SK-N-SH (cell line): ENCODE measurements at regions of chr10 and their contacts with region 1.

Region 1: GRCh38 chr10:100562008-100562711 is 26.4 kb downstream of the HIF1AN start:
- DNase-seq: peak; percentile 94
- H3K4me3 ChIP-seq: no peak overlapping the region; a peak in 1 of 4 replicates
- H3K27ac ChIP-seq: no peak overlapping the region
- H3K4me1 ChIP-seq: no peaks in the 10 kb centered on the region; a peak in 1 of 4 replicates
- H3K27me3 ChIP-seq: no peaks in the 10 kb centered on the region
- CTCF ChIP-seq: peak; percentile 67
- EP300 ChIP-seq: no peak
- RAD21 ChIP-seq: peak; percentile 97

Region 2: GRCh38 chr10:100377830-100378229 is 184.3 kb before region 1 on chr10:
- CTCF ChIA-PET with region 1: no interaction called
- POLR2A ChIA-PET with region 1: no interaction called
- DNase-seq: no peak
- H3K4me3 ChIP-seq: no peak overlapping the region
- H3K27ac ChIP-seq: no peak overlapping the region
- H3K4me1 ChIP-seq: peaks cover 3 to 5% of the 10 kb centered on the region in 2 experiments
- H3K27me3 ChIP-seq: no peaks in the 10 kb centered on the region
- CTCF ChIP-seq: no peak
- EP300 ChIP-seq: no peak
- RAD21 ChIP-seq: no peak

Region 3: GRCh38 chr10:100551196-100551595 is 11.0 kb before region 1 on chr10:
- CTCF ChIA-PET with region 1: interaction called, 69 read pairs
- POLR2A ChIA-PET with region 1: interaction called, 3 read pairs
- DNase-seq: no peak
- H3K4me3 ChIP-seq: no peak overlapping the region
- H3K27ac ChIP-seq: no peak overlapping the region; a peak in 1 of 4 replicates
- H3K4me1 ChIP-seq: peaks cover 0 to 8% of the 10 kb centered on the region in 2 experiments; a peak in 1 of 4 replicates
- H3K27me3 ChIP-seq: no peaks in the 10 kb centered on the region
- CTCF ChIP-seq: no peak
- EP300 ChIP-seq: no peak
- RAD21 ChIP-seq: no peak

Region 4: GRCh38 chr10:100670828-100671479 is 108.8 kb after region 1 on chr10:
- CTCF ChIA-PET with region 1: interaction called, 12 read pairs
- POLR2A ChIA-PET with region 1: no interaction called
- DNase-seq: peak; percentile 92
- H3K4me3 ChIP-seq: peak overlapping the region; percentile 6 to 51; a peak in 1 of 4 replicates
- H3K27ac ChIP-seq: no peak overlapping the region
- H3K4me1 ChIP-seq: no peaks in the 10 kb centered on the region; a peak in 1 of 4 replicates
- H3K27me3 ChIP-seq: peaks cover 30% of the 10 kb centered on the region
- CTCF ChIP-seq: peak; percentile 70
- EP300 ChIP-seq: no peak
- RAD21 ChIP-seq: peak; percentile 54

Region 5: DNA sequence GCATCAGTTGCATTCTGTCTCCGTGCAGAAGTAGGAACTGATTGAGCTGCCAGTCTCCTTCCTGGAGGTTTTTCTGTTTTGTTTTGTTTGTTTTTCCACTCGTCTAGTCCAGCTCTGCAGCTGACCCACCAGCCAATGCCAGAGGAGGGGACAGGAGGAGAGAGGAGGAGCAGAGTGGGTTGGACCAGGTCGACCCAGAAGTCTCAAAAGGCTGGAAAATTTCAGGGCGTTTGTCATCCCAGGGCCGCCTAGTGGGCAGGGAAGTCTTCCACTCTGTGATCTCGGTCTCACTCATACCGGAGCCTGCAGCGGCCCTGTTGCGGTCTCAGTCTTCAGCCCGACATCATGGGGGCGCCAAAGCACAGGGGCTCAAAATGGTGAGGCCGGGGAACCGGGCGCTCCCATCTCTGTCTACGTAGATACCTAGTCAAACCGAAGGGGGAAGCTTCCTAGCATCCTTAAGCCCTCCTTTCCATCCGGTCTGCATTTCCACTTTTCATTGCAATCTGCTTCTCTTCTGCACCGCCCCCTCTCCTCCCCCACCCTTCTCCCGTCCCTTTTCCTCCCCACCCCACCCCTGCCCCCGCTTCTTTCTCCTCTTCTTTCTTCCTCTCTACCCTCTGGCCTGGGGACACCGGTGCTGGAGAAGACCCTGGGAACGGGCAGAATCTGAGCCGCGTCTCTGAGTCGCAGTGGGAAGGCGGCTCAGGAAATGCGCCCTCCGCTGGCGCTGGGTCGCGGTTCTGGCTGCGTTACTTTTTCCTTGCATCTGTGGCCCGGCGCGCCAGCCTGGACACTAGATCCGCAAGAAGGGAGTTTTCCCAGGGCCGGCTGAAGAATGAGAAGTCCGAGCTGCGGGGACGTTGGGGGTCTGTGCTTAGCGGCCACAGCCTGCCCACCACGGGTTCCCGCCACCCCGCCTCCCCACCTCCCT is 167.0 kb after region 1 on chr10:
- CTCF ChIA-PET with region 1: interaction called, 20 read pairs
- POLR2A ChIA-PET with region 1: interaction called, 3 read pairs
- DNase-seq: peak; percentile 83
- H3K4me3 ChIP-seq: no peak overlapping the region; a peak in 1 of 4 replicates
- H3K27ac ChIP-seq: no peak overlapping the region
- H3K4me1 ChIP-seq: peaks cover 0 to 11% of the 10 kb centered on the region in 2 experiments; a peak in 1 of 4 replicates
- H3K27me3 ChIP-seq: peaks cover 91% of the 10 kb centered on the region
- CTCF ChIP-seq: peak; percentile 40
- EP300 ChIP-seq: no peak
- RAD21 ChIP-seq: peak; percentile 64

Region 6: GRCh38 chr10:100817268-100817839 is 255.2 kb after region 1 on chr10:
- CTCF ChIA-PET with region 1: interaction called, 14 read pairs
- POLR2A ChIA-PET with region 1: no interaction called
- DNase-seq: no peak
- H3K4me3 ChIP-seq: no peak overlapping the region
- H3K27ac ChIP-seq: no peak overlapping the region
- H3K4me1 ChIP-seq: peaks cover 0 to 4% of the 10 kb centered on the region in 2 experiments; a peak in 1 of 4 replicates
- H3K27me3 ChIP-seq: peaks cover 37% of the 10 kb centered on the region
- CTCF ChIP-seq: no peak
- EP300 ChIP-seq: no peak
- RAD21 ChIP-seq: peak; percentile 59

Region 7: GRCh38 chr10:100872034-100872791 is 310.1 kb after region 1 on chr10:
- CTCF ChIA-PET with region 1: interaction called, 116 read pairs
- POLR2A ChIA-PET with region 1: interaction called, 3 read pairs
- DNase-seq: peak; percentile 91
- H3K4me3 ChIP-seq: no peak overlapping the region; a peak in 1 of 4 replicates
- H3K27ac ChIP-seq: 0 out of 4 replicates have a peak overlapping the region, but pooled peaks of 1 of the 2 experiments have one; percentile 7
- H3K4me1 ChIP-seq: no peaks in the 10 kb centered on the region; a peak in 2 of 4 replicates
- H3K27me3 ChIP-seq: no peaks in the 10 kb centered on the region
- CTCF ChIP-seq: peak; percentile 68
- EP300 ChIP-seq: no peak
- RAD21 ChIP-seq: peak; percentile 80

Region 8: GRCh38 chr10:100888796-100889356 is 326.7 kb after region 1 on chr10:
- CTCF ChIA-PET with region 1: interaction called, 12 read pairs
- POLR2A ChIA-PET with region 1: no interaction called
- DNase-seq: no peak
- H3K4me3 ChIP-seq: no peak overlapping the region
- H3K27ac ChIP-seq: no peak overlapping the region
- H3K4me1 ChIP-seq: peaks cover 0 to 11% of the 10 kb centered on the region in 2 experiments; a peak in 3 of 4 replicates
- H3K27me3 ChIP-seq: no peaks in the 10 kb centered on the region
- CTCF ChIP-seq: peak; percentile 53
- EP300 ChIP-seq: no peak
- RAD21 ChIP-seq: 0 out of 2 replicates have a peak, but pooled peaks have one; percentile 12